ENCODE measurements at regions of chr1 and their contacts with region 1.

Region 1: DNA sequence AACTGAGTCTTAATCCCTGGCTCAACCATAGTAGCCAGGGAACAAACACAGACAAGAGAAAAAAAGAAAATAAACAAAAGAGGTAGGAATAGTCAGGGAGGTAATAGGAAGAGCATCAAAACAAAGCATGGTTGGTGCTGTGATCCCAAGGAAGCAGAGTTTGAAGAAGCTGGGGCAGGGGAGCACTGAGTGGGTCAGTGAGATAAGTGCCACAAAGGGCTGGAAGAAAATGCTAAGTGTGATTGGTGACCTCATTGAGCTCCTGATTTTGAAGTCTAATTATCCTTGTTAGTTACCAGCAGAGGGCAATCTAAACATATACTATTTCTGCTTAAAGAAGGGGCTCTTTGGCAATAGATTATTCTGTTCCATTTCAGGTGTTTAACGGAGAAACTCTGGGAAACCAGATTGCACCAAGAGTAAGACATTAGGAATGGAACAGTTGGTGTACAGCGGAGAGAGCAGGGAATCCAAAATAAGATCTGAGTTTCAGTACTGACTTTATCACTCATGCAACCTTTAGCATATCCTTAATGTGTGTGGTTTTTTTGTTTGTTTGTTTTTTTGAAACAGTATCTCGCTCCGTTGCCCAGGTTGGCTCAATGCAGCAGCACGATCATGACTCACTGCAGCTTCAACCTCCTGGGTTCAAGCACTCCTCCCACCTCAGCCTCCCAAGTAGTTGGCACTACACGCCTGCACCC is 30.7 kb upstream of the KIAA1614 start:
- DNase-seq: no peak
- H3K4me3 ChIP-seq: no peak overlapping the region
- H3K27ac ChIP-seq: no peak overlapping the region
- H3K4me1 ChIP-seq: no peaks in the 10 kb centered on the region
- H3K27me3 ChIP-seq: no peaks in the 10 kb centered on the region
- CTCF ChIP-seq: peak in 4 of 6 experiments; percentile 34 to 78 (median 62)
- POLR2A ChIP-seq: no peak

Region 2: GRCh38 chr1:181166377-181167196 is 284.6 kb after region 1 on chr1:
- intact Hi-C with region 1: loop called (anchors 5 kb)
- DNase-seq: peak; percentile 67 to 68
- H3K4me3 ChIP-seq: no peak overlapping the region
- H3K27ac ChIP-seq: no peak overlapping the region
- H3K4me1 ChIP-seq: no peaks in the 10 kb centered on the region
- H3K27me3 ChIP-seq: no peaks in the 10 kb centered on the region
- CTCF ChIP-seq: peak; percentile 53 to 87 (median 79)
- POLR2A ChIP-seq: no peak

Region 3: DNA sequence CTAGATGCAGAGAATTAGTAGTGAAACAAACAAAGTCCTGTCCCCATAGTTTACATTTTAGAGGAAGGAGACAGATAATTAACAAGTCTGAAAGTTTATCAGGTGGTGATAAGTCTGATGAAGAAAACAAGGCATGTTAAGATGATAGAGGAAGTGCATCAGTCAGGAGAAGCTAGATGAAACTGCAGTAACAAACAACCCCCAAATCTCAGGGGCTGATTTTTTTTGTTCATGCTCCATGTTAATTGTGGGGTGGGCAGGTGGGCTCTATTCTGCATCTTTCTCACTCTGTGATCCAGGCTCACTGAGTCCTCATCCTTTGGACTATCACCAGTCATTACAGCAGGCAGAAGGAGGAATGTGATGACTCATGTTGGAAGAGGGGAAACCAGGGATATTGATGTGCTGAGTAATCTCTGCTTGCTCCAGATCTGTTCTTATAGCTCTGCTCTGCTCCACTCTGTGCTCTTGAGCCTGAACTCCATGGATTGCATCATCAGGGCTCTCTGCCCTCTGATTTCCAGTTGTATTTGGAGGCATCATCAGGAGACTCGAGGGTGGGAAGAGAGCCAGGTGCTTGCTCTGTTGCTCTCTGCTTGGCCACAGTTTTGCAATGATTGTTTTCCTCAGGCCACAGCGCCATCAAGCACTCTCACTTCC is 373.4 kb after region 1 on chr1:
- intact Hi-C with region 1: no loop called
- DNase-seq: peak; percentile 81 to 89
- H3K4me3 ChIP-seq: no peak overlapping the region
- H3K27ac ChIP-seq: no peak overlapping the region
- H3K4me1 ChIP-seq: no peaks in the 10 kb centered on the region
- H3K27me3 ChIP-seq: no peaks in the 10 kb centered on the region
- CTCF ChIP-seq: no peak
- POLR2A ChIP-seq: no peak